ENCODE measurements at regions of chr10 and their contacts with region 1.

Region 1: DNA sequence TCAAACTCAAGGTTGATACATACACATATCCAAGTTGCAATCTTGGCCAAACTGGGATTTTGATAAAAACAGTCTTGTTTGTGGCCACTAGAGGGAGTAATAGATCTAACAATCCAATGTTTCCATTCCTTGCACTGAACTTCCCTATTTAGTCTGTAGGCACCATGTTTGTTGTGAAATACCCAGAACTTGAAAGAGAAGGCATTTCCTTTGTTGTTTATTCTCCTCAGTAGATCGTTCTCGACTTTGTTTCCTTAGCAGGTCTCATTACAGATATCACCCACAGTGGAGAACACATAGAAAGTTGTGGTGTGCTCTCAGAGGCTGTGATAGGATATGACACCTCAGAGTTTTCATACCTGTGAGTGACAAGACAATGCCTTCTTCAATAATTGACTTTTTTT is 70.3 kb upstream of the MXI1 start:
- DNase-seq: no peak
- ATAC-seq: peak; percentile 91 to 93
- H3K4me3 ChIP-seq: no peak overlapping the region
- H3K27ac ChIP-seq: peak overlapping the region; percentile 37 to 65 (median 58)
- H3K4me1 ChIP-seq: peaks cover 11 to 17% of the 10 kb centered on the region in 2 donors
- H3K27me3 ChIP-seq: no peaks in the 10 kb centered on the region
- CTCF ChIP-seq: peak; percentile 77 to 93 (median 83)
- POLR2A ChIP-seq: no peak

Region 2: GRCh38 chr10:109883859-109884771 is 253.0 kb before region 1 on chr10:
- in situ Hi-C with region 1: loop called in 3 of 4 experiments (anchors 10 to 25 kb)
- intact Hi-C with region 1: loop called (anchors 5 kb)
- DNase-seq: peak; percentile 36 to 60
- ATAC-seq: peak; percentile 87
- H3K4me3 ChIP-seq: no peak overlapping the region
- H3K27ac ChIP-seq: peak overlapping the region; percentile 10 to 60 (median 40)
- H3K4me1 ChIP-seq: peaks cover 7 to 14% of the 10 kb centered on the region in 2 donors
- H3K27me3 ChIP-seq: no peaks in the 10 kb centered on the region
- CTCF ChIP-seq: peak; percentile 86 to 93 (median 90)
- POLR2A ChIP-seq: no peak

Region 3: GRCh38 chr10:110110338-110110737 is 26.8 kb before region 1 on chr10:
- in situ Hi-C with region 1: no loop called
- intact Hi-C with region 1: no loop called
- DNase-seq: no peak
- ATAC-seq: no peak
- H3K4me3 ChIP-seq: no peak overlapping the region
- H3K27ac ChIP-seq: no peak overlapping the region
- H3K4me1 ChIP-seq: no peaks in the 10 kb centered on the region
- H3K27me3 ChIP-seq: no peaks in the 10 kb centered on the region
- CTCF ChIP-seq: no peak
- POLR2A ChIP-seq: no peak

Region 4: DNA sequence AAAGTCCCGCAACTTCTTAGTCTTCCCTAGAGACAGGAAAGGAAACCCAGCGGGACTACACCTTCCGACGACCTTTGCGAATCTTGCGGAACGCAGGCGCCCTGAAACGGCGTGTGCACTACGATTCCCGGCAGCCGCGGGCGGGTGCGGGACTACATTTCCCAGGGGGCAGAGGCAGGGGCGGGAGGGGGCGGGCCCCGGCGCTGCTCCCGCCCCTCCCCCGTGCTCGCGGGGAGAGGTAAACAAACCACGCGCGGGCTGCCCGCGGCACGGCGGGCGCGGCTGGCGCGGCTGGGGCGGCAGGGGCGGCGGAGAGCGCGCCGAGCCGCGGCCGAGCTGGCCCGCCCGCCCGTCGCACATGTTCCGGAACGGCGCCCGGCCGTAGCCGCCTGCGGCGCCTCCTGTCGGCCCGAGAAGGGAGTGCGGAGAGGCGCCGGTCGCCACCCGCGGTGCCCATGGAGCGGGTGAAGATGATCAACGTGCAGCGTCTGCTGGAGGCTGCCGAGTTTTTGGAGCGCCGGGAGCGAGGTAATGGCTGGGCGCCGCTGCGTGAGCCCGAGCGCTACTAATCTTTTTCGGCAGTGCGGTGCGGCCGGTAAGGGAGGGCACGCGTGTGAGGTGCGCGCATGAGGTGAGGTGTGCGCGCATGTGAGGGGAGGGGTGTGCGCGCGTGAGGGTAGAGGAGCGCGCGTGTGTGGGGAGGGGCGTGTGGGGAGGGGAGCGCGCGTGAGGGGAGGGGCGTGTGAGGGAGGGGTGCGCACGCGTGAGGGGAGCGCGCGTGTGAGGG is 88.8 kb after region 1 on chr10:
- in situ Hi-C with region 1: loop called in 1 of 4 experiments (anchors 5 kb)
- intact Hi-C with region 1: loop called (anchors 2 kb)
- DNase-seq: peak; percentile 87 to 90
- ATAC-seq: peak; percentile 73 to 77
- H3K4me3 ChIP-seq: peak overlapping the region; percentile 89 to 95 (median 93)
- H3K27ac ChIP-seq: peak overlapping the region; percentile 99 to 100 (median 99)
- H3K4me1 ChIP-seq: peaks cover 20 to 30% of the 10 kb centered on the region in 2 donors
- H3K27me3 ChIP-seq: no peaks in the 10 kb centered on the region
- CTCF ChIP-seq: peak; percentile 62 to 93 (median 87)
- POLR2A ChIP-seq: peak; percentile 72 to 86

Region 5: DNA sequence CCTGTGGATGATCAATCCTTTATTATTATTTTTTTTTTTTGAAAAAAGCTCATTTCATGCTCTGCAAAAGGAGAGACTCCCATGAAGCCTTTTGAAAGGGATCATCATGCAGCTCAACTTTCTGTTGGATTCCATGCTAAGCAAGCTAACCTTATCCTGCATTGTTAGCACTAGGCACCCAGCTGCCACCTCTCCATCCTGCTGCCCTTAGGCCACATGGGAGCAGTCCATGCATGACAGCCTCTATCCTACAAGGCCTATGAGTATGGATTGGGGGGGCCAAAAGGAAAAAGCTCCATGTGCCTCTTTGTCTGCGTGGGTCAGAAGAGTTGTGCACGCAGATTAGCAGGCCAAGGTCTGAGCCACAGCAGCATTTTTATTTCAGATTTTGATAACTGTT is 148.4 kb after region 1 on chr10:
- in situ Hi-C with region 1: loop called (anchors 5 kb)
- intact Hi-C with region 1: no loop called
- DNase-seq: no peak
- ATAC-seq: no peak
- H3K4me3 ChIP-seq: no peak overlapping the region
- H3K27ac ChIP-seq: no peak overlapping the region
- H3K4me1 ChIP-seq: no peaks in the 10 kb centered on the region
- H3K27me3 ChIP-seq: no peaks in the 10 kb centered on the region
- CTCF ChIP-seq: no peak
- POLR2A ChIP-seq: no peak

Region 6: GRCh38 chr10:110547139-110547761 is 410.1 kb after region 1 on chr10:
- in situ Hi-C with region 1: loop called (anchors 5 to 10 kb)
- intact Hi-C with region 1: loop called (anchors 1 kb)
- DNase-seq: no peak
- ATAC-seq: peak; percentile 52 to 70
- H3K4me3 ChIP-seq: no peak overlapping the region
- H3K27ac ChIP-seq: no peak overlapping the region
- H3K4me1 ChIP-seq: no peaks in the 10 kb centered on the region
- H3K27me3 ChIP-seq: peaks cover 0 to 6% (median 0%) of the 10 kb centered on the region in 3 donors
- CTCF ChIP-seq: peak; percentile 57 to 81 (median 72)
- POLR2A ChIP-seq: no peak

Measured in gastrocnemius medialis (tissue), 4 donors.